CD8-positive, alpha-beta T cell (primary cell): ENCODE measurements at regions of chr5 and their contacts with region 1.

Region 1: DNA sequence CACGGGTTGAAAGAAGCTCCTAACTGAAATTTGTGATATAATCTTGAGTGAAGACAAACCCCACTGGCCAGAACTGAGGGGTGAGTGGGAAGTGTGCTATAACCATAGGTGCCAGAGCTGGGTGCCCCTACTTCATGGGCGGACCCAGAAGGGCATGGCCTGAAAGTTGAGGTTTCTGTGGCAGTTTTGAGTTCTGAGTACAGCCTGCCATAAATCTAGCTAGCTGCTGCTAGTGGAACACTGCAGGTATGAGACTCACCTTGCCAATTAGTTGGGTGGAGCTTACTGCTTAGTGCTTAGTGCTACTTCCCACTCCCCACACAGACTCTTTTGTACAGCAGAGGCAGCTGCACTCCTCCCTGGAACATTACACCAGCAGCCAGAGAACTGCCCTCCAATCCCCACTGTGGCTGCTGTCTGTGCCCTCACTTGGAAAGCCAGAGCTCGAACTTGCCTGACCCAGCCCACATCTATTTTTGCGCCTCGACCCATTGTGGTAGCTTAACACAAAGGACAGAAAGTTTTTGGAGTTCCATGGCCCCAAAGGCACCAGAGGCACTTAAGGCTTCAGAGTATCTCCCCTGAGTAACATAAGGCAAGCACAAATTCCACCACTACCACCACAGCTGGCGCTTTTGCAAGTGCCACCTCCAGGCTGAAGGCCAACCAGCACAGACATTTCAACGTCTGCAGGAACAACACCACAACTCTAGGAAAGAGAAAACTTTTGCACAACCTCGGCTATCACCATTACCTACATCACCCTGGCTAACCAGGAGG is 27.1 kb upstream of the PTGER4 start:
- DNase-seq: peak in 3 of 9 experiments; percentile 41 to 58 (median 44)
- ATAC-seq: peak; percentile 39
- H3K4me3 ChIP-seq: no peak overlapping the region
- H3K4me3 Mint-ChIP-seq: peak overlapping the region; percentile 79
- H3K27ac ChIP-seq: peak overlapping the region; percentile 38 to 71
- H3K27ac Mint-ChIP-seq: peak overlapping the region; percentile 93
- H3K4me1 ChIP-seq: peaks cover 56% of the 10 kb centered on the region
- H3K4me1 Mint-ChIP-seq: peaks cover 78% of the 10 kb centered on the region
- H3K27me3 ChIP-seq: no peaks in the 10 kb centered on the region
- H3K27me3 Mint-ChIP-seq: no peaks in the 10 kb centered on the region
- CTCF ChIP-seq: no peak

Region 2: GRCh38 chr5:40578501-40579451 is 73.9 kb before region 1 on chr5:
- CTCF ChIA-PET with region 1: no interaction called
- POLR2A ChIA-PET with region 1: interaction called, 5 read pairs
- intact Hi-C with region 1: loop called in 1 of 2 experiments (anchors 5 kb)
- DNase-seq: peak in 2 of 9 experiments; percentile 5 to 29
- ATAC-seq: no peak
- H3K4me3 ChIP-seq: no peak overlapping the region
- H3K4me3 Mint-ChIP-seq: peak overlapping the region; percentile 79
- H3K27ac ChIP-seq: no peak overlapping the region
- H3K27ac Mint-ChIP-seq: peak overlapping the region; percentile 49
- H3K4me1 ChIP-seq: peaks cover 9% of the 10 kb centered on the region
- H3K4me1 Mint-ChIP-seq: peaks cover 21% of the 10 kb centered on the region
- H3K27me3 ChIP-seq: no peaks in the 10 kb centered on the region
- H3K27me3 Mint-ChIP-seq: no peaks in the 10 kb centered on the region
- CTCF ChIP-seq: no peak

Region 3: GRCh38 chr5:40615586-40616170 is 37.0 kb before region 1 on chr5:
- CTCF ChIA-PET with region 1: no interaction called
- POLR2A ChIA-PET with region 1: interaction called, 3 read pairs
- intact Hi-C with region 1: loop called in 1 of 2 experiments (anchors 5 kb)
- DNase-seq: peak in 2 of 9 experiments; percentile 21 to 47
- ATAC-seq: peak; percentile 73
- H3K4me3 ChIP-seq: no peak overlapping the region
- H3K4me3 Mint-ChIP-seq: peak overlapping the region; percentile 44
- H3K27ac ChIP-seq: peak overlapping the region in 1 of 2 experiments; percentile 16
- H3K27ac Mint-ChIP-seq: peak overlapping the region; percentile 80
- H3K4me1 ChIP-seq: peaks cover 10% of the 10 kb centered on the region
- H3K4me1 Mint-ChIP-seq: peaks cover 29% of the 10 kb centered on the region
- H3K27me3 ChIP-seq: no peaks in the 10 kb centered on the region
- H3K27me3 Mint-ChIP-seq: no peaks in the 10 kb centered on the region
- CTCF ChIP-seq: no peak

Region 4: DNA sequence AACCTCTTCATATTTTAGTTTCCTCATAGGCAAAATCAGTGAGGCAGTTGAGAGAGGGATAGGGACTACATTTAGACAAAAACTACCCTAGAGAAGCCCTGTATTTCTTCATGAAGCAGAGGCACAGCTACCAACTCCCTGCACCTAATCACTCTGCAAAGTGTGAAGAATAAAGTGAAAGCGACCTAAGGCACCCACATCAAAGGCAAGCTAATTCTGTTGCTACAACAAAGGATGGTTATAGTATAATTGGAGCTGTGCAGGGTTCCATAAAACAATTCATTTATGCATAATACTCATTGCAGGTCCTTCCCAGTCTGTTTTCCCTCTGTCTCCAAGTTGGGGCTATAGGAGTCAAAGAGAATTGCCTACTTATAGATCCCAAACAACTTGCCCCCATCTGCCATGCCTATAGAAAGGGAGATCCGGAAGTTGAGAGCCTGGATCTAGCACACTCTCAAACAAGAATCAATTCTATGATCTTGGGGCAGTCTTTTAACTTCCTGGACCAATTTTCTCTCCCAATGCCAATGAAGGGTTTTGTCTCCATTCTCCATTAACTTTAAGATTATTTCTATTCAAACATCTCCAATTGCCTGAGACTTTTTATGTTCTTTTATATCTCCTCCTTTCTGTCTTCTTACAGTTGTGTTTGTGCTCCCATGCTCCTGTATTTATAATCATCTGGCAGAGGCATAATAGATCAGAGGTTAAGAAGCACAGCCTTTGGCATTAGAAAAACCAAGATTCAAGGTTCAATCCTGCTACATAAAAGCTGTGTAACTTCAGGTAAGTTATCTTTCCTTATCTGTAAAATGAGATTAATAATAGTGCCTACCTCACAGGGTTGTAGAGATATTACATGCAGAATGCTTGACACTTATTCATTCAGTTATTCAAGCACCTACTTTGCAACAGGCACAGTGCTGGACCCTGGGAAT is 28.9 kb before region 1 on chr5:
- CTCF ChIA-PET with region 1: interaction called, 3 read pairs
- POLR2A ChIA-PET with region 1: interaction called, 5 read pairs
- intact Hi-C with region 1: loop called (anchors 2 to 5 kb)
- DNase-seq: peak in 6 of 9 experiments; percentile 2 to 77 (median 48)
- ATAC-seq: peak; percentile 92
- H3K4me3 ChIP-seq: no peak overlapping the region
- H3K4me3 Mint-ChIP-seq: peak overlapping the region; percentile 35
- H3K27ac ChIP-seq: peak overlapping the region in 1 of 2 experiments; percentile 31
- H3K27ac Mint-ChIP-seq: peak overlapping the region; percentile 84
- H3K4me1 ChIP-seq: peaks cover 29% of the 10 kb centered on the region
- H3K4me1 Mint-ChIP-seq: peaks cover 55% of the 10 kb centered on the region
- H3K27me3 ChIP-seq: no peaks in the 10 kb centered on the region
- H3K27me3 Mint-ChIP-seq: no peaks in the 10 kb centered on the region
- CTCF ChIP-seq: no peak

Region 5: DNA sequence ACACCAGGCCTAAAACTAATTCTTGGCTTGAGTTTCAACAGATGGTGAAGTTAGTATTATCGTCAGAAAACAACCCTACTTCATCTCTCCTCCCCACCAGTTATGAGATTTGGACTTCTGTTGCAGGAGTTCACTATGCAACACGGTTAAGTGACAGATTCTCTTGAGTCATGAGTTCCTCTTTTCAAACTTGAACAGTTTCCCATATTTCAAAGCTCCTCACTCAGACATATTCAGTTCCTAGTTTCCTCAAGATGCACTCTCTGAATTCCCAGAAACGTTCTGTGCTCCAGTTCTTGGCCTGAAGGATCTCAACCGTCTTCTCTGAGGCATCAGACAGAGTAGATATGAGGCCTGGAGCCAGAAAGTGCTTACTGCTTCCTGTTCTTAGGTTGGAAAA is 19.8 kb after region 1 on chr5:
- CTCF ChIA-PET with region 1: no interaction called
- POLR2A ChIA-PET with region 1: interaction called, 5 read pairs
- intact Hi-C with region 1: loop called in 1 of 2 experiments (anchors 2 kb)
- DNase-seq: no peak
- ATAC-seq: no peak
- H3K4me3 ChIP-seq: no peak overlapping the region
- H3K4me3 Mint-ChIP-seq: no peak overlapping the region
- H3K27ac ChIP-seq: no peak overlapping the region
- H3K27ac Mint-ChIP-seq: peak overlapping the region; percentile 20
- H3K4me1 ChIP-seq: peaks cover 43% of the 10 kb centered on the region
- H3K4me1 Mint-ChIP-seq: peaks cover 72% of the 10 kb centered on the region
- H3K27me3 ChIP-seq: no peaks in the 10 kb centered on the region
- H3K27me3 Mint-ChIP-seq: no peaks in the 10 kb centered on the region
- CTCF ChIP-seq: no peak